CD4-positive, alpha-beta memory T cell (primary cell): ENCODE measurements at regions of chr11 and their contacts with region 1.

Region 1: DNA sequence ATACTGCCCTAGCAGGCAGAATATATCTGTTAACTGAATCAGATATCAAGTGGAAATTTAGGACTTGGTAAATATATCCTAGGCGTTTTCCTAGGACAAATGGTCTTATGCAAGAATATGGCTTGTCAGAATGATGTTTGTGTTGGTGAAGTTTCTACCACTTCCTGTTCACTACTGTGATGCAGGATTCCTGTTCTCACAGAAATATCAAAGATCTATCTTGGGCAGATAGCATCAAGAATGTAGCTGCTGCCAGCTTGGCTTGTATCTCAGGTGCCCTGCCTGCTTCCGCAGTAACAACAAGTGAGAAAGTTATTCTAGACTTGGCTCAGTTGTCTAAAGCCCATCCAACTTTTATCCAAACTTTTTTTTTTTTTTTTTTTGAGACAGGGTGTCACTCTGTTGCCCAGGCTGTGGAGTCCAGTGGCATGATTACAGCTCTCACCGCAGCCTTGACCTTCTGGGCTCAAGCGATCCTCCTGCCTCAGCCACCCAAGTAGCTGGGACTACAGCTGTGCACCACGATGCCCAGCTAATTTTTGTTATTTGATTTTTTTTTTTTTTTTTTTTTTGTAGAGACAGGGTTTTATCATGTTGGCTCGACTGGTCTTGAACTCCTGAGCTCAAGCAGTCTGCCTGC is 61.3 kb downstream of the PPME1 start:
- DNase-seq: peak; percentile 46 to 68 (median 52)
- H3K4me3 ChIP-seq: peak overlapping the region in 1 of 2 donors; percentile 16
- H3K4me3 Mint-ChIP-seq: peak overlapping the region in 7 of 8 donors; percentile 0 to 64 (median 21)
- H3K27ac ChIP-seq: peak overlapping the region; percentile 29
- H3K27ac Mint-ChIP-seq: peak overlapping the region in 6 of 7 donors; percentile 27 to 96 (median 90)
- H3K4me1 ChIP-seq: peaks cover 32% of the 10 kb centered on the region
- H3K4me1 Mint-ChIP-seq: peaks cover 13 to 24% (median 17%) of the 10 kb centered on the region in 4 donors
- H3K27me3 ChIP-seq: no peaks in the 10 kb centered on the region
- H3K27me3 Mint-ChIP-seq: no peaks in the 10 kb centered on the region

Region 2: DNA sequence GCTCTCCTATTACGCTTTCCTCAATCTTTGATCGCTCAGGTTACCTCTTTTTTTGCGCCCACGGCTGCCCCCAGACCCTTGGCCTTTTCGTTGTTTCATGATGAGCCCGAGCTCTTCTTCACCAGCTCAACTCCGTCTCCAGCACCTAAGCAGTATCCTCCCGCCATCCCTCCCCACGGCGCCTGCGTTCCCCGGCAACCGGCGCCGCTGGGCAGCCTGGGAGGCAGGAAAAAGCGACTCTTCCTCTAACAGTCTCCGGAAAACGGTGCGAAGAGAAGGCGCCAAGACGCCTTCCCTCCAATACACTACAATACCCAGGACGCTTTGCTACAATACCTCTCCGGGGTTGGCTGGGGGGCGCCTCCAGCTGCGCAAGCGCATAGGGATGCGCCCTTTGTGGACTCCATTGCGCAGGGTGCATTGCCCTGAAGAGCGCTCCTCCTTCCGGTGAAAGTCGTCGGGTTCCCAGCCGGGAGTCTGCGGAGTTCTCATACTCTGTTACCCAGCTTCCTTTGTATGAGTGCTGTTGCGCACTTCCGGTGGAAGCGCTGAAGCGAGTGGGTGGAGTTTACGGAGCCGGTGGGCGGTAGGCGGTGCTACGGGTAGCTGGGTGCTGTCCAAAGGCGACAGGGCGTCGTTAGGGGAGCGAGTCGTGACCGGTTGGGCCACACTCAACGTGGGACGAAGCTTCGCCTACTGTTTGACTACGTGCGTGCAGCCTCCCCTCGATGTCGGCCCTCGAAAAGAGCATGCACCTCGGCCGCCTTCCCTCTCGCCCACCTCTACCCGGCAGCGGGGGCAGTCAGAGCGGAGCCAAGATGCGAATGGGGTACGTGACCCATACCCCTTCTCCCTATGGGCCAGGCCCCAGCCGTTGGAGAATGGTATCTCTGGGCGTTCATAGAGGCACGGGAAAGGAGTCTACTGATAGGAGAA is 61.5 kb before region 1 on chr11 and contains the starts of genes C2CD3 and PPME1:
- CTCF ChIA-PET with region 1: no interaction called
- POLR2A ChIA-PET with region 1: interaction called, 18 read pairs
- intact Hi-C with region 1: loop called (anchors 2 kb)
- DNase-seq: peak; percentile 97 to 99 (median 99)
- H3K4me3 ChIP-seq: peak within 1 kb of the TSS; percentile 74 to 86
- H3K4me3 Mint-ChIP-seq: no peak within 1 kb of the TSS
- H3K27ac ChIP-seq: peak within 1 kb of the TSS; percentile 70
- H3K27ac Mint-ChIP-seq: no peak within 1 kb of the TSS
- H3K4me1 ChIP-seq: peaks cover 40% of the 10 kb centered on the region
- H3K4me1 Mint-ChIP-seq: peaks cover 18 to 22% (median 18%) of the 10 kb centered on the region in 4 donors
- H3K27me3 ChIP-seq: no peaks in the 10 kb centered on the region
- H3K27me3 Mint-ChIP-seq: no peaks in the 10 kb centered on the region
- total RNA-seq, gene C2CD3: 41.9 to 52.7 TPM
- total RNA-seq, gene PPME1: 20.7 to 21.9 TPM

Region 3: DNA sequence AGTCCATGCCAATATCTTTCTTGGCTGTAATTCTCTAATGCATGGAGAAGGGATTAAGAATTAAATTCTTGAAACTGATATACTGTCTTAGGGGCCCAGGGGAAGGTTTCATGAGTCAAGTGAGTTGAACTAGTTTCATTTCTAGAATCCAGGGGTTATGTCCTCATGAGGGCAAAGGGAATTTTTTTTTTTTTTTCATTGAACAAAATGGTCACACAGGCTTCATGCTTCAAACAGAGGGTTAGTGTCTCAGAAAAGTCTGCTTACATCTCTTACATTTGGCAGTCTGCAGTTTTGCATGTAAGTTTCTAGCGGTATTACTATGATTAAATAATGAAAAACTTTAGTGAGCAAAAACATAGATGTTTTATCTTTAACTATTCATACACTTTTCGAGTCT is 28.5 kb before region 1 on chr11:
- CTCF ChIA-PET with region 1: no interaction called
- POLR2A ChIA-PET with region 1: no interaction called
- intact Hi-C with region 1: no loop called
- DNase-seq: no peak
- H3K4me3 ChIP-seq: no peak overlapping the region
- H3K4me3 Mint-ChIP-seq: no peak overlapping the region
- H3K27ac ChIP-seq: no peak overlapping the region
- H3K27ac Mint-ChIP-seq: no peak overlapping the region
- H3K4me1 ChIP-seq: no peaks in the 10 kb centered on the region
- H3K4me1 Mint-ChIP-seq: no peaks in the 10 kb centered on the region
- H3K27me3 ChIP-seq: no peaks in the 10 kb centered on the region
- H3K27me3 Mint-ChIP-seq: no peaks in the 10 kb centered on the region